ENCODE measurements at regions of chr6 and their contacts with region 1.

Region 1: DNA sequence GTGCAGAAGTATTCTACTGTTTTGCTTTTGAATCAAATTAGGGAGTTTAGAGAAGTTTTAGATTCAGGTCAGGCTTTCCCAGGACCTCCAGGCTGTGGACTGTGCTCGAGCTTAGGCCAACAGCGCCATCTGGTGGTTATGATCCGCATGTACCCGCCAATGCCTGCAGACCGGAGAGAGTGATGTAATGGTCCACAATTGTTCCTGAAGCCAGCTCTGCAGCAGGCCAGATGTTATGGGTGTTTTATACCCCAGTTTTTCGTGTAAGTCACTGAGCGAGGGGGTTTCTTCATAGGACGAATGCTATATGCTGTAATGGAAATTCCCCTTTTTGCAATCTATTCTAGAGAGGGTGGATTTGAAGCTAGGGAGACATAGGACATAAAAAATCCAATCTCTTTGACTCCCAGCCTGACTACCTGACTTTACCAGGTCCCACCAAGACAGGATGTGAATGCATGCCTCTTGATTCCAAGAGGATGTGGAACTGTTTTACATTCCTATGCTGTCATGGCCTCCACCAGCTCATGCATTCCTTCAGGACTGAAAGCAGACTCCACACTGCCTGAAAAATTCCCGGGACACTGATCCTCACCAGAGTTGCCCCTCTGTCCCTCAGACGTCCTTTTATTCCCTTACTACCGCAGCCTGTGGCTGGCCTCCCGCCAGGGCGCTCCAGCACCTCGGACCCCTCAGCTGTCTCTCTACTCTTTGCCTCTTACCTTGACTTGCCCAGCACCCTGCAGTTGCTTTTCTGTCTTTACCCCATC is 41.2 kb upstream of the LY86 start:
- DNase-seq: peak; percentile 88
- H3K4me3 Mint-ChIP-seq: peak overlapping the region; percentile 57
- H3K27ac Mint-ChIP-seq: peak overlapping the region; percentile 3
- H3K4me1 Mint-ChIP-seq: peaks cover 3% of the 10 kb centered on the region
- H3K27me3 Mint-ChIP-seq: peaks cover 44% of the 10 kb centered on the region

Region 2: GRCh38 chr6:6057424-6058053 is 489.8 kb before region 1 on chr6:
- CTCF ChIA-PET with region 1: interaction called, 48 read pairs
- POLR2A ChIA-PET with region 1: no interaction called
- intact Hi-C with region 1: loop called (anchors 1 kb)
- DNase-seq: no peak
- H3K4me3 Mint-ChIP-seq: no peak overlapping the region
- H3K27ac Mint-ChIP-seq: no peak overlapping the region
- H3K4me1 Mint-ChIP-seq: no peaks in the 10 kb centered on the region
- H3K27me3 Mint-ChIP-seq: peaks cover 21% of the 10 kb centered on the region

Region 3: DNA sequence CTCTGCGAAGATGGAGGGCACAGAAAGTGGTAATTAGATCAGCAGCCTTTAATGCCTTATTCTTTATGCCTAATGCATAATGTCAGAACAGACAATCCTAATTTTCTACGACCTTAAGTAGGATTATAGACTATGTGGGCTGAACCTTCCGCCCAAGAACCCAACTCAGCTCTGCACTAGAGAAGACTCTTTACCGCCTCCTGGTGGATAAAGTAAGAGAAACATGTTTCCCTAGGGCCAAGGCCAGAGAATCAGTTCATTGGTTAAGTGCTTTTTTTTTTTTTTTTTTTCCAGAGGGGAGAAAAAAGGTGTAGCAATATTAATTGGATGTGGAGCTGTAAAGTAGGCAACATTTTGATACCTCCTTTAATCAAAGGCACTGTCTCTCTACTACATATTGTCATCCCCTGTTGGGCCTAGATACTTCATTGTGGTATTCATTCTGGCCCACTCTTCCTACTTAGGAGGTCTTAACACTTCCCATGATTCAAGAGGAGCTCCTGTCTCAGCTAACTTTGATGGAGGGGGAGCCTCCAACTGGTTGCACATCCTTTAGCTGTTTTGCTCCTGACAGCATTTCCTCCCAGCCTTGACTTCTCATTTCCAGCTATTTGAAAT is 415.7 kb before region 1 on chr6:
- CTCF ChIA-PET with region 1: interaction called, 18 read pairs
- POLR2A ChIA-PET with region 1: no interaction called
- intact Hi-C with region 1: loop called (anchors 10 kb)
- DNase-seq: no peak
- H3K4me3 Mint-ChIP-seq: no peak overlapping the region
- H3K27ac Mint-ChIP-seq: no peak overlapping the region
- H3K4me1 Mint-ChIP-seq: no peaks in the 10 kb centered on the region
- H3K27me3 Mint-ChIP-seq: peaks cover 5% of the 10 kb centered on the region

Region 4: GRCh38 chr6:6315660-6316059 is 231.6 kb before region 1 on chr6:
- CTCF ChIA-PET with region 1: no interaction called
- POLR2A ChIA-PET with region 1: no interaction called
- intact Hi-C with region 1: loop called (anchors 10 kb)
- DNase-seq: peak; percentile 42
- H3K4me3 Mint-ChIP-seq: no peak overlapping the region
- H3K27ac Mint-ChIP-seq: no peak overlapping the region
- H3K4me1 Mint-ChIP-seq: no peaks in the 10 kb centered on the region
- H3K27me3 Mint-ChIP-seq: peaks cover 27% of the 10 kb centered on the region